ENCODE measurements at regions of chr18 and their contacts with region 1.

Region 1: DNA sequence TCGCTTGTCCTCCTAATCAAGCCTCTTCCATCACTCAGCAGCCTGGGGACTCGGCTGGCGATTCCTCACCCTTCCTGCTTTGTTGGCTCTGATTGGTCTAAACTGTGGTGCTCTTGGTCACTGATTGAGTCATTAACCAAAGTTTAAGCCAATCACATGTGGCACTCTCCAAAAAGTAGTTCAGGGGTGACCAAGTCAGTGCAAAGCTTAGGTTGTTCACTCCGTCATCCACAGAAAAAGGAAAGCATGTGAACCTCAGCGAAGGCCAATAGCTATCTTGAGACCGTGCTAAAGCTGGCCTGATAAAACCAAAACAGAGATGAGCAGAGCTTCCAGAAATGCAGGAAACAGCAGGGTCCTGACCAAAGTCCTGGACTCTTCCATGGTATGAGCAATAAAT is 4.9 kb downstream of the ALPK2 start:
- DNase-seq: no peak
- H3K4me3 Mint-ChIP-seq: no peak overlapping the region
- H3K27ac Mint-ChIP-seq: no peak overlapping the region
- H3K4me1 Mint-ChIP-seq: peaks cover 18% of the 10 kb centered on the region
- H3K27me3 Mint-ChIP-seq: peaks cover 2% of the 10 kb centered on the region

Region 2: GRCh38 chr18:58649966-58650816 is 26.2 kb after region 1 on chr18:
- CTCF ChIA-PET with region 1: no interaction called
- POLR2A ChIA-PET with region 1: no interaction called
- intact Hi-C with region 1: loop called (anchors 2 kb)
- DNase-seq: peak; percentile 44
- H3K4me3 Mint-ChIP-seq: no peak overlapping the region
- H3K27ac Mint-ChIP-seq: peak overlapping the region; percentile 43
- H3K4me1 Mint-ChIP-seq: peaks cover 57% of the 10 kb centered on the region
- H3K27me3 Mint-ChIP-seq: no peaks in the 10 kb centered on the region

Region 3: DNA sequence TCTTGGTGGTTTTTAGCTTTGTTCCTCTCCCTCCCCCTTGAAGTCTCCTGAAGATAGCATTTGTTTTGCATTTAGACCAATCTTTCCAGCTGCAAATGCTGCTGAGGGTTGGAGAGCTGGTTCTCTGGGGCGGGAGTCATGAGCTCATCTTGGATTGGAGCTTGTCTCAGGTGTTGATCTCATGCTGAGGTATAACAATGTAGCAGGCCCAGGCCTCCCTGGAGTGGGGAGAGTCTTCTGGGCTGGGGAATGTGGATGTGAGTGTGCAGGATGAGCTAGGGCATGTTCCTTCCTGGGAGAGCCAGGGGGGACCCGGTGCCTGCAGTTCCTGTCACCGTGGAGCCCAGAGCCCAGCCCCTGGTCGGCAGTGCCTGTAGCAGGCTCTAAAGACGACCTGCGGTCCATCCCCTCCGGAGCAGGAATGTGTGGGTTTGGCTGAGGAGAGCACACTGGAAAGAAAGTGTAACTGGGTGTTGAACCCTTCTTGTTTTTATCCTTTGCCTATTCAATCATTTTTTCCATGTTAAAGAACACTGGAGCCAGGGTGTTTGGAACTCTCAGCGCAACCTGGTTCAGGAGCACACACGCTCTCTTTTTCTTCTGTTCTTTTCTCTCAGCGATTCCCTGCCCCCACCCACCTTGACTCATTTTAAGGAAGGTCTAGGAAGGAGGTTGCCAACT is 243.4 kb after region 1 on chr18:
- CTCF ChIA-PET with region 1: no interaction called
- POLR2A ChIA-PET with region 1: no interaction called
- intact Hi-C with region 1: no loop called
- DNase-seq: no peak
- H3K4me3 Mint-ChIP-seq: no peak overlapping the region
- H3K27ac Mint-ChIP-seq: no peak overlapping the region
- H3K4me1 Mint-ChIP-seq: peaks cover 9% of the 10 kb centered on the region
- H3K27me3 Mint-ChIP-seq: peaks cover 45% of the 10 kb centered on the region

Measured in activated CD4-positive, alpha-beta memory T cell treated with anti-CD3 and anti-CD28 coated beads for 36 hours (primary cell).